ENCODE measurements at regions of chr3 and their contacts with region 1.

Region 1: DNA sequence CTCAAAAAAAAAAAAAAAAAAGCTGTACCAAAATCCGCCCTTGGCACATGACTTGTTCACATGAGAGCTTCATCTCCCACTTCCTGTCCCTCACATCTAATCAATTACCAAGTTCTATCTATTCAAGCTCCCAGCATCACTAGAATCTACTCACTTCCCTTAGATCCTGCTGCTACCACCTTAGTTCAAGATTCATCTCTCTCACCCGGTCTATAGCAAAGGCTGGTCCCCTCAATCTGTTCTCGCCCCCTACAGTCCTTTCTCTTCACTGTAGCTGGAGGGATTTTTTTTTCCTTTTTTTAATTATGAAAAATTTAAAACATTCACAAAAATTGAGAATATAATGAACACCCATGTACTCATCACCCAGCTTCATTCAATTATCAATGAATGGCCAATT is 16.7 kb upstream of the GPR160 start:
- DNase-seq: peak; percentile 66
- H3K4me3 ChIP-seq: no peak overlapping the region
- H3K27ac ChIP-seq: no peak overlapping the region
- H3K4me1 ChIP-seq: no peaks in the 10 kb centered on the region
- CTCF ChIP-seq: peak; percentile 77

Region 2: GRCh38 chr3:169619793-169620192 is 401.3 kb before region 1 on chr3:
- CTCF ChIA-PET with region 1: no interaction called
- POLR2A ChIA-PET with region 1: no interaction called
- intact Hi-C with region 1: no loop called
- DNase-seq: no peak
- H3K4me3 ChIP-seq: no peak overlapping the region
- H3K27ac ChIP-seq: no peak overlapping the region
- H3K4me1 ChIP-seq: no peaks in the 10 kb centered on the region
- CTCF ChIP-seq: peak; percentile 34

Region 3: GRCh38 chr3:169863458-169863899 is 157.6 kb before region 1 on chr3:
- CTCF ChIA-PET with region 1: interaction called, 3 read pairs
- POLR2A ChIA-PET with region 1: interaction called, 3 read pairs
- intact Hi-C with region 1: loop called (anchors 1 kb)
- DNase-seq: peak; percentile 85
- H3K4me3 ChIP-seq: no peak overlapping the region
- H3K27ac ChIP-seq: no peak overlapping the region
- H3K4me1 ChIP-seq: peaks cover 33% of the 10 kb centered on the region
- CTCF ChIP-seq: peak; percentile 99

Region 4: GRCh38 chr3:169931747-169932520 is 89.1 kb before region 1 on chr3:
- CTCF ChIA-PET with region 1: interaction called, 3 read pairs
- POLR2A ChIA-PET with region 1: interaction called, 3 read pairs
- intact Hi-C with region 1: loop called (anchors 1 kb)
- DNase-seq: peak; percentile 94
- H3K4me3 ChIP-seq: peak overlapping the region; percentile 56
- H3K27ac ChIP-seq: peak overlapping the region; percentile 86
- H3K4me1 ChIP-seq: peaks cover 81% of the 10 kb centered on the region
- CTCF ChIP-seq: no peak

Region 5: GRCh38 chr3:170007031-170007663 is 13.9 kb before region 1 on chr3:
- CTCF ChIA-PET with region 1: interaction called, 4 read pairs
- POLR2A ChIA-PET with region 1: interaction called, 15 read pairs
- intact Hi-C with region 1: no loop called
- DNase-seq: peak; percentile 69
- H3K4me3 ChIP-seq: no peak overlapping the region
- H3K27ac ChIP-seq: no peak overlapping the region
- H3K4me1 ChIP-seq: peaks cover 45% of the 10 kb centered on the region
- CTCF ChIP-seq: no peak